H1 (cell line): ENCODE measurements at regions of chr1 and their contacts with region 1.

Region 1: GRCh38 chr1:147084273-147085096 is 87.8 kb downstream of the PRKAB2 start:
- DNase-seq: peak; percentile 81 to 85
- H3K4me3 ChIP-seq: peak overlapping the region; percentile 74 to 95 (median 88)
- H3K27ac ChIP-seq: peak overlapping the region; percentile 100
- H3K4me1 ChIP-seq: peaks cover 3 to 20% (median 12%) of the 10 kb centered on the region in 4 experiments; a peak in 6 of 7 replicates
- H3K27me3 ChIP-seq: peaks cover 21 to 62% (median 48%) of the 10 kb centered on the region in 4 experiments
- CTCF ChIP-seq: no peak
- EP300 ChIP-seq: no peak; a peak in 1 of 3 replicates
- POLR2A ChIP-seq: peak; percentile 100
- RAD21 ChIP-seq: no peak

Region 2: DNA sequence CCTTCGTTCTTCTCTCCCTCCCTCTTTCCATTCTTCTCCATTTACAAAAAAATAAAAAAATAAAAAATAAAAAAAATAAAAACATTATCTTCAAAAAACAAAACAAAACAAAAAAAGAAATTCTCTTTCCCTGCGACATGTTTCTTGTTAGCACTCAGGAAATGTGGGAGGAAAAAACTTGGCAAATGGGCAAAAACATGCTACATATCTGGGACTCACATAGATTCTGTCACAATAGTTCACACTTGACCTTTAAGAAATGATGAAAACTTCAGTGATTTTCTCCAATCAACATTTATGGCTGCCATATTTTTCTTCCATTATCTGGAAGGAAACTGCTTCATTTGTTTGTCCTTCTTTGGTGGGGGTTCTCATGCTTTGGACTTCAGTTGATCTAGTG is 21.5 kb before region 1 on chr1:
- CTCF ChIA-PET with region 1: no interaction called
- POLR2A ChIA-PET with region 1: interaction called, 11 read pairs
- DNase-seq: no peak
- H3K4me3 ChIP-seq: no peak overlapping the region
- H3K27ac ChIP-seq: no peak overlapping the region
- H3K4me1 ChIP-seq: no peaks in the 10 kb centered on the region
- H3K27me3 ChIP-seq: no peaks in the 10 kb centered on the region
- CTCF ChIP-seq: no peak
- EP300 ChIP-seq: no peak
- POLR2A ChIP-seq: no peak
- RAD21 ChIP-seq: no peak

Region 3: GRCh38 chr1:147109762-147110161 is 25.3 kb after region 1 on chr1:
- CTCF ChIA-PET with region 1: interaction called, 4 read pairs
- POLR2A ChIA-PET with region 1: interaction called, 47 read pairs
- DNase-seq: no peak
- H3K4me3 ChIP-seq: no peak overlapping the region
- H3K27ac ChIP-seq: no peak overlapping the region
- H3K4me1 ChIP-seq: no peaks in the 10 kb centered on the region
- H3K27me3 ChIP-seq: no peaks in the 10 kb centered on the region
- CTCF ChIP-seq: no peak
- EP300 ChIP-seq: no peak
- POLR2A ChIP-seq: no peak
- RAD21 ChIP-seq: no peak

Region 4: DNA sequence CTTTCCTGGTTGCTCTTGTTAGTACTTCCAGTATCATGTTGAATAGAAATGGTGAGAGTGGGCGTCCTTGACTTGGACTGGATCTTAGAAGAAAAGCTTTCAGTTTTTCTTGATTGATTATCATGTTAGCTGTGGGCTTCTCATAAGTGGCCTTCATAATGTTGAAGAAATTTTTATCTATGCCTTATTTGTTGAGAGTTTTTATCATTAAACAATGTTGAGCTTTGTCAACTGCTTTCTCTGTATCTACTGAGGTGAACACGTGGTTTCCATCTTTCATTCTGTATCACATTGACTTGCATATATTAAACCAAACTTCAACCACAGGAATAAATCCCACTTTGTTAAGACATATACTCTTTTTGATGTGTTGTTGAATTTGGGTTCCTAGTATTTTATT is 58.4 kb after region 1 on chr1:
- CTCF ChIA-PET with region 1: no interaction called
- POLR2A ChIA-PET with region 1: interaction called, 18 read pairs
- DNase-seq: no peak
- H3K4me3 ChIP-seq: no peak overlapping the region
- H3K27ac ChIP-seq: no peak overlapping the region
- H3K4me1 ChIP-seq: no peaks in the 10 kb centered on the region
- H3K27me3 ChIP-seq: no peaks in the 10 kb centered on the region
- CTCF ChIP-seq: no peak
- EP300 ChIP-seq: no peak
- POLR2A ChIP-seq: no peak
- RAD21 ChIP-seq: no peak

Region 5: GRCh38 chr1:147236959-147237826 is 152.7 kb after region 1 on chr1:
- CTCF ChIA-PET with region 1: interaction called, 3 read pairs
- POLR2A ChIA-PET with region 1: interaction called, 48 read pairs
- DNase-seq: no peak
- H3K4me3 ChIP-seq: no peak overlapping the region
- H3K27ac ChIP-seq: no peak overlapping the region
- H3K4me1 ChIP-seq: peaks cover 0 to 10% (median 2%) of the 10 kb centered on the region in 4 experiments; a peak in 2 of 7 replicates
- H3K27me3 ChIP-seq: no peaks in the 10 kb centered on the region
- CTCF ChIP-seq: no peak
- EP300 ChIP-seq: no peak
- POLR2A ChIP-seq: no peak
- RAD21 ChIP-seq: no peak

Region 6: DNA sequence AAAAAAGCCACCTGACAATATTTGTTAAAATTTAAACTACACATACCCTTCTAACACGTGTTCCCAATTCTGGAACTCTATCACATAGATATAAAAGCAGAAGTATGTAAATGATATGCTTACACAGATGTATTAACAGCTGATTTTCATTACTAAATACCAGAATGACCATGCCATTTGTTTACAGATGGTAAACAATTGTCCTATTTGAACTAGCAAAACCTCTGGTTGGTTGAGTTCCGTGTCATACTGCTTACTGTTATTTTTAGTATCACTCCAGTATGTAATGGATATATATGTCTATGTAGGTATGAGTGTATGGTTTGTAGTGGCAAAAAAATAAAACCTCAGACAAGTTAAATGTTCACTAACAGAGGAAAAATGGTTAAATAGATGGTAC is 228.8 kb after region 1 on chr1:
- CTCF ChIA-PET with region 1: no interaction called
- POLR2A ChIA-PET with region 1: no interaction called
- DNase-seq: no peak
- H3K4me3 ChIP-seq: no peak overlapping the region
- H3K27ac ChIP-seq: no peak overlapping the region
- H3K4me1 ChIP-seq: no peaks in the 10 kb centered on the region
- H3K27me3 ChIP-seq: no peaks in the 10 kb centered on the region; a peak in 1 of 7 replicates
- CTCF ChIP-seq: no peak
- EP300 ChIP-seq: no peak
- POLR2A ChIP-seq: no peak
- RAD21 ChIP-seq: no peak